Sigmoid colon (tissue), 7 donors: ENCODE measurements at regions of chr15 and their contacts with region 1.

Region 1: GRCh38 chr15:39976291-39977274 is 42.7 kb downstream of the EIF2AK4 start:
- DNase-seq: peak; percentile 82
- H3K4me3 ChIP-seq: peak overlapping the region; percentile 43 to 68 (median 62)
- H3K27ac ChIP-seq: peak overlapping the region; percentile 59 to 79 (median 78)
- H3K4me1 ChIP-seq: peaks cover 0 to 39% (median 17%) of the 10 kb centered on the region in 4 donors
- H3K27me3 ChIP-seq: no peaks in the 10 kb centered on the region
- CTCF ChIP-seq: peak; percentile 41 to 66 (median 60)
- EP300 ChIP-seq: no peak
- POLR2A ChIP-seq: no peak

Region 2: DNA sequence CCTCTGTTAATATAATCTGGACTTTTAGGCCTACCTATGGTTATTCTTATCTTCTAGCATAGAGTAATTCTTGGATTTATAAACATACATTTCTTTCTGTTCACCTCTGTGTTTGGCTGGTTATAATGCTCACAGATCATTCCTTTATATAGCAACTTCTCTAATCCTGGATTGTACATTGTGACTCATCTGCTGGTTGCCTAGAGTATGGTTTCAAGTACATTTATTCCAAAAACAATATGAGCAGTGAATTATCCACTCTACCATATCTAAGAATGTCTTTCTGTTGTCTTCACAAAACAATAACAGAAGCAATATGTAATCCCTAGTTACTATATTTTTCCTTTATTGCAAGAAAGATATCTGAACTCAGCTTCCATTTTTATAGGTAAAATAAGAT is 229.3 kb before region 1 on chr15:
- intact Hi-C with region 1: no loop called
- DNase-seq: no peak
- H3K4me3 ChIP-seq: no peak overlapping the region
- H3K27ac ChIP-seq: peak overlapping the region in 2 of 4 donors; percentile 42 to 53
- H3K4me1 ChIP-seq: peaks cover 0 to 19% (median 9%) of the 10 kb centered on the region in 4 donors
- H3K27me3 ChIP-seq: no peaks in the 10 kb centered on the region
- CTCF ChIP-seq: no peak
- EP300 ChIP-seq: no peak
- POLR2A ChIP-seq: no peak

Region 3: DNA sequence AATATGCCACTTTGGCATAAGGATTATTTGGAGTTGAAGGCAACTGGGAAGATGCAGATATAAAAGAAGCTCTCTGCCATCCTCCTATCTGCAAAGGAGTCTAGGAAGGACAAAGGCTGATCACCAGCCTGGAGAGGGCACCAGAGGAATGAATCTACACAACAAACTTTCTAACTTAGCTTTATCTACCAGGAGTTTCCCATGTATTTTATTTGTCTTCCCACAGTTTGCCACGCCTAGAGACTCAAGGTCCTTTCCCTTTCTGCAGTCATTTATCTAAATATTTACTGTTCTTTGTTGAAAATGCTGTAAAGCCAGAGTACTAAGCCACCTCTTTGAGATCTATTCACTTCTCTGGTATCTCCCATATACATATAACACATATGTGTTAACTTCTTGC is 88.8 kb before region 1 on chr15:
- intact Hi-C with region 1: loop called (anchors 5 kb)
- DNase-seq: no peak
- H3K4me3 ChIP-seq: no peak overlapping the region
- H3K27ac ChIP-seq: no peak overlapping the region
- H3K4me1 ChIP-seq: no peaks in the 10 kb centered on the region
- H3K27me3 ChIP-seq: peaks cover 0 to 4% (median 0%) of the 10 kb centered on the region in 3 donors
- CTCF ChIP-seq: peak in 3 of 4 experiments; percentile 25 to 29 (median 26)
- EP300 ChIP-seq: no peak
- POLR2A ChIP-seq: no peak

Region 4: DNA sequence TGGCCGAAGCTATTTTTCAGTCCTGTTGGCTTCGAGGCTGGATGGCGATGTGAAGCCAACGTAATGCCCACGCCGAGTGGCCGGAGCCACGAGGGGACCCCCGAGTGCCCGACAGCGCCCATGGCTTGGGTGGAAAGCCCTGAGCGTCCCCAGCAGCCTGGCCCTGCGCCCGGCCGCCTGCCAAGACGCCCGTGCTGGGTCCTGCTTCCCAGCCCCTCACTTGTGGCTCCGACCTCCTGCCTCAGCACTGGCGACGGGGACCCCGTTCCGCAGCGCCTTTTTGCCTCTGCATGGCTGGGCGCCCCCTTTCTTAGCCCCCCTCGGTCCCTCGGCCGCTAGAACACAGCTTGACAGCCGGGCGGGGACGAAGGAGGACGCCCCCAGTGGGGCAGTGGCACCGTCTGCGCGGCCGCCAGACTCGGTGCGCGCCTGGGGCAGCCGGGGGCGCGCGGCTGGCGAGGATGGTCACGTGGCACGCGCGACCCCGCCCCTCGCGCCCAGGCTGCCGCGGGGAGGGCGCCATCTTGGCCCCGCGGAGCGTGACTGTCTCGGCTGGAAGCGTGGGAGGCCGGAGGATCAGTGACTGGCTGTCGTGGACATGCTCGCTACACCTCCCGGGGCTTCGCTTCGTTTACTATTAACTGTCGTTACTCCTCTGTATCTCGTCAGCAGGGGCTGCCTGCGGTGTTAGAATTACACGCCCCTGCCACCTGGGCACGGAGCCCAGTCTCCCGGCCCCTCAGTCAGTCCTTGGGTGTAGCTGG is 55.9 kb before region 1 on chr15:
- intact Hi-C with region 1: loop called (anchors 5 kb)
- DNase-seq: peak; percentile 81
- H3K4me3 ChIP-seq: peak overlapping the region; percentile 54 to 79 (median 74)
- H3K27ac ChIP-seq: peak overlapping the region; percentile 71 to 87 (median 80)
- H3K4me1 ChIP-seq: peaks cover 0 to 27% (median 14%) of the 10 kb centered on the region in 4 donors
- H3K27me3 ChIP-seq: peaks cover 0 to 11% (median 0%) of the 10 kb centered on the region in 3 donors
- CTCF ChIP-seq: peak in 1 of 4 experiments; percentile 10
- EP300 ChIP-seq: no peak
- POLR2A ChIP-seq: no peak

Region 5: GRCh38 chr15:40029979-40030893 is 53.7 kb after region 1 on chr15:
- intact Hi-C with region 1: no loop called
- DNase-seq: no peak
- H3K4me3 ChIP-seq: no peak overlapping the region
- H3K27ac ChIP-seq: peak overlapping the region in 3 of 4 donors; percentile 12 to 33 (median 22)
- H3K4me1 ChIP-seq: no peaks in the 10 kb centered on the region
- H3K27me3 ChIP-seq: no peaks in the 10 kb centered on the region
- CTCF ChIP-seq: peak in 1 of 4 experiments; percentile 33
- EP300 ChIP-seq: no peak
- POLR2A ChIP-seq: no peak